HepG2 (cell line): ENCODE measurements at regions of chr10 and their contacts with region 1.

Region 1: DNA sequence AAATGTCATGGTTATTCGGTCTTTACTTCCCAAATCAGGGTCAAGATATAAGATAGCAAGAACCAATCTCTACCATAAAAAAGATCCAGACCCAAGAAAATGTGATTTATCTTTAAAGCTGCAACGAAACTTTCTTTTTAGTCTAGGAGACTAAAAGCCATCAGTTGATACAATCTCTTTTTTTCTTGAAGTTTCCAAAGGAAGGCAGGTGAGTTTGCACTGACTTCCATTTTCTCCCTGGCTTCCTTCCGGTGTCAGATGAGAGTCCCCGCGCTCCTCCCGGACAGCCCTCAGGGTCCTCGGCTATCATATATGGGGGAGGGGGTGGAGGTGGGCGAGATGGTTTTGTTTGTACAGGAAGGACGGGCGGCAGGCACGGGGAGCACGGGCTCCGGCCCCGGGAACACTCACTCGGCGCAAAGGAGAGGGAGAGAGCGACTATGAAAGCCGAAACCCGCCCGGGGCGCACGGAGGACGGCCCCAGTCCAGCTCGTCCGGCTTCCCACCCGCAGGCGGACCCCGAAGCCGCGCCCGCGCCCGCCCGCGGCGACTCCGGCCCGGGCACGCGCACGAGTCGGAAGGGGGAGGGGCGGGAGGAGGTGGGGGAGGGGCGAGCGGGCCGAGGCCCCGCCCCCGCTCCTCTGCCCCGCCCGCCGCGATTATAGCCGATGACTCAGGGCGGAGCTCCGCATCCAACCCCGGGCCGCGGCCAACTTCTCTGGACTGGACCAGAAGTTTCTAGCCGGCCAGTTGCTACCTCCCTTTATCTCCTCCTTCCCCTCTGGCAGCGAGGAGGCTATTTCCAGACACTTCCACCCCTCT is at the start of gene BAG3:
- DNase-seq: peak; percentile 69
- ATAC-seq: peak; percentile 88
- H3K4me3 ChIP-seq: peak within 1 kb of the TSS; percentile 89 to 98 (median 96)
- H3K27ac ChIP-seq: peak within 1 kb of the TSS; percentile 81
- H3K4me1 ChIP-seq: peaks cover 51% of the 10 kb centered on the region
- H3K27me3 ChIP-seq: no peaks in the 10 kb centered on the region
- CTCF ChIP-seq: no peak; the same call in 1 of the 2 replicates
- EP300 ChIP-seq: 0 out of 4 replicates have a peak, but pooled peaks of 1 of the 2 experiments have one; percentile 15
- POLR2A ChIP-seq: peak; percentile 93 to 94
- RAD21 ChIP-seq: no peak
- total RNA-seq, gene BAG3: 6.7 and 7.9 TPM in 2 replicates

Region 2: GRCh38 chr10:119139464-119140067 is 511.3 kb before region 1 on chr10:
- CTCF ChIA-PET with region 1: no interaction called
- POLR2A ChIA-PET with region 1: no interaction called
- in situ Hi-C with region 1: no loop called
- intact Hi-C with region 1: no loop called
- DNase-seq: peak; percentile 28
- ATAC-seq: peak; percentile 89
- H3K4me3 ChIP-seq: no peak overlapping the region
- H3K27ac ChIP-seq: no peak overlapping the region
- H3K4me1 ChIP-seq: no peaks in the 10 kb centered on the region
- H3K27me3 ChIP-seq: no peaks in the 10 kb centered on the region
- CTCF ChIP-seq: peak; percentile 88
- EP300 ChIP-seq: no peak
- POLR2A ChIP-seq: no peak
- RAD21 ChIP-seq: peak; percentile 75; the same call in 1 of the 2 replicates

Region 3: DNA sequence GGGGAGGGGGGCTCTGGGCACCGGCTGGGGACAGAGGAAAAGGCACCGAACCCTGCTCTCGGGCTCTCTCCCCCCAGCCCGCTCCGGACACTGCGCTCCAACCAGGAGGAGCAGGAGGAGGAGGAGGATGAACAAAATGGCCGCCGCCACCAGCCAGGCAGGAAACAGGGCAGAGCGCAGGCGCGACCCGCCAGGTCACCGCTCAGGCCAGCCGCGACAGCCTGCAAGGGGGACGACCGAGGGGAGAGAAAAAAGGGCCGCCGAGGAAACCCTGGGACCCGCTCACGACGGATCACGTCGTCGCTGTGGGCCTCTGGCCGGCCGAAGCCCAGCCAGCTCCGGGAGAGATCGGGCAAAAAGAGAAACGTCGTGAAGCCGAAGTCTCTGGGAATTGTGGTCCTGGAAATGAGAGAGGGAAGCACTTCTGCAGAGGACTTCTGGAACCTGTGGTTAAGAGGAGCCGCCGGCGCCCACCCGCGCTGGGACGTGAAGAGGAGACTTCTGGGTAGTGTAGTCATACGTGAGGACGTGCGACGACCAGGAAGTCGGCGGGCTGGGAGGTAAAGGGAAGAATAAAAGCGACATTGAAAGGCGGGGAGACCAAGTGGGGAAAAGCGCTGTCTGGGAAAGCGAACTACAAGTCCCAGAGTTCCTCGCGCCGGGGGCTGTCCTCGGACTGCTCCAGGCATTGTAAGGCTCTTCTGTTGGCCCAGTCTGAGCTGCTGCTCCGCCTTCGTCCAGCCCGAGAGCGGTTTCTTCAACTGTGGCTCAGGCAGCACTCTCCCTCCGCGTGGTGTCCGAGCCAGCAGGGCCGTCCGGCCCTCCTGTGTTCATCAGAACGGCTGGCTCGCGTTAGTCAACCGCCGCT is 54.1 kb before region 1 on chr10 and contains the start of gene TIAL1:
- CTCF ChIA-PET with region 1: no interaction called
- POLR2A ChIA-PET with region 1: interaction called, 11 read pairs
- in situ Hi-C with region 1: no loop called
- intact Hi-C with region 1: no loop called
- DNase-seq: peak; percentile 99
- ATAC-seq: peak; percentile 96
- H3K4me3 ChIP-seq: peak within 1 kb of the TSS; percentile 89 to 90 (median 90)
- H3K27ac ChIP-seq: peak within 1 kb of the TSS; percentile 98
- H3K4me1 ChIP-seq: peaks cover 45% of the 10 kb centered on the region
- H3K27me3 ChIP-seq: no peaks in the 10 kb centered on the region; a peak in 1 of 5 replicates
- CTCF ChIP-seq: 0 out of 2 replicates have a peak, but pooled peaks have one; percentile 14
- EP300 ChIP-seq: peak; percentile 10 to 11; a peak in 1 of 4 replicates
- POLR2A ChIP-seq: peak; percentile 79 to 96
- RAD21 ChIP-seq: no peak; the same call in 1 of the 2 replicates
- total RNA-seq, gene TIAL1: 31.5 and 36.6 TPM in 2 replicates

Region 4: GRCh38 chr10:119616882-119617570 is 33.9 kb before region 1 on chr10:
- CTCF ChIA-PET with region 1: no interaction called
- POLR2A ChIA-PET with region 1: interaction called, 4 read pairs
- in situ Hi-C with region 1: no loop called
- intact Hi-C with region 1: loop called (anchors 2 kb)
- DNase-seq: peak; percentile 50
- ATAC-seq: peak; percentile 79
- H3K4me3 ChIP-seq: no peak overlapping the region
- H3K27ac ChIP-seq: no peak overlapping the region
- H3K4me1 ChIP-seq: peaks cover 52% of the 10 kb centered on the region
- H3K27me3 ChIP-seq: peaks cover 0 to 3% of the 10 kb centered on the region in 2 experiments; a peak in 1 of 5 replicates
- CTCF ChIP-seq: peak; percentile 79
- EP300 ChIP-seq: no peak
- POLR2A ChIP-seq: no peak
- RAD21 ChIP-seq: peak; percentile 59; the same call in 1 of the 2 replicates

Region 5: DNA sequence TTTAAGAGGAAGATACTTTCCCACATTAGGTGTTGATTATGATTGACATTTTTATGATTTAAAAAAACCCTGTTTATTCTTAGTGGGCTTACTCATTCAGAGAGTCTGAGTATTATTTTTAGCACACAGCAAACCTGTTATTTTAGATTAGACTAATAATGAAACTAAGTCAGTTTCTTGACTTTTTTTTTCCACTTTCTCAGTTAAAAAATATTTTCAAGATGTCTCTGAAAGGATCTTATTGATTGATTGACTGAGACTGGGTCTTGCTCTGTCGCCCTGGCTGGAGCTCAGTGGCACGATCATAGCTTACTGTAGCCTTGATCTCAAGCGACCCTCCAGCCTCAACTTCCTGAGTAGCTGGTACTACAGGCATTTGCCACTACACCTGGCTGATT is 54.5 kb after region 1 on chr10:
- CTCF ChIA-PET with region 1: no interaction called
- POLR2A ChIA-PET with region 1: no interaction called
- in situ Hi-C with region 1: no loop called
- intact Hi-C with region 1: no loop called
- DNase-seq: no peak
- ATAC-seq: no peak
- H3K4me3 ChIP-seq: no peak overlapping the region
- H3K27ac ChIP-seq: no peak overlapping the region
- H3K4me1 ChIP-seq: peaks cover 6% of the 10 kb centered on the region; the same call in 1 of the 2 replicates
- H3K27me3 ChIP-seq: peaks cover 0 to 4% of the 10 kb centered on the region in 2 experiments; a peak in 1 of 5 replicates
- CTCF ChIP-seq: no peak
- EP300 ChIP-seq: no peak
- POLR2A ChIP-seq: no peak
- RAD21 ChIP-seq: no peak